Activated CD8-positive, alpha-beta T cell treated with anti-CD3 and anti-CD28 coated beads for 36 hours (primary cell): ENCODE measurements at regions of chr10 and their contacts with region 1.

Region 1: GRCh38 chr10:44974628-44975431 is 3.8 kb downstream of the DEPP1 start:
- DNase-seq: peak; percentile 68
- ATAC-seq: peak; percentile 96
- H3K4me3 Mint-ChIP-seq: peak overlapping the region; percentile 65
- H3K27ac Mint-ChIP-seq: peak overlapping the region; percentile 67
- H3K4me1 Mint-ChIP-seq: peaks cover 19% of the 10 kb centered on the region
- H3K27me3 Mint-ChIP-seq: no peaks in the 10 kb centered on the region
- CTCF ChIP-seq: peak; percentile 93

Region 2: DNA sequence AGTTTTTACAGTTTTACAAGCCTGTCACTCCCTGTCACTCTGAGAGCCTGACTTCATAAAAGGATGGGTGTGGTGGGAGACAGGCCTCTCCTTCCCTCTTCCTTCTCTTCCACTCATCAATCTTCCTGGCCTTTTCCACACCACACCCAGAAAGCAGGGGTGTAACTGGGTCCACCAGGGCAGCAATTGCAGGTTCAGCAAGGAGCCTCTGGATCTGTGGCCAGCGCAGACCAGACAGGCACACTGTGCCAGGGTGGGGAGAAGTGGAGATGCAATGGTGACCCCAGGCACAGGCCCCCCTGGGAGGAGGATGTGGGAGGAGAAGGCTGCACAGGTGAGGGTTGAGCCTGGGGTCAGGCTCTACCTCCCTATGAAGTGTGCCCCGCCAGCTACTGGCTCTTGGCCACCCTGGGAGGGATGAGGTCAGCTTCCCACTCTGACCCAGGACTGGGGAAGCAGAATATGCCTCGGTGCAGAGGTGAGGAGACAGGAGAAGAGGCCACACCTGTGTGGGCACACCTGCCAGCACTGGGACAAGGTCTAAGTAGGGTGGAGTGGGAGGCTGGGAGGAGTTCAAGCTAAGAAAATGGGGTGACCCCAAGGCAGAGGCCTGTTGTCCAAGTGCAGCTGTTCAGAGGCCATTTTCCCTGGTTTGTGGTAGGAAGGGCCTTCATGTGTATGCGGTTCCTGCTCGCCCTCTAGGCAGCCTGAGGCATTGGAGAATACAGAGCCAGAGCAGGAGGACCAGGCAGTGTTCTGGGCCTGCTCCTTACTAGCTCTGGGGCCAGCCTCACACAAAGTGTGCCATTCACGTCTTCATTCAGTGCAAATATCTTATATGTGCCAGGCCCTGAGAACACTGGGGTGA is 83.9 kb before region 1 on chr10:
- CTCF ChIA-PET with region 1: no interaction called
- POLR2A ChIA-PET with region 1: no interaction called
- intact Hi-C with region 1: no loop called
- DNase-seq: no peak
- ATAC-seq: no peak
- H3K4me3 Mint-ChIP-seq: no peak overlapping the region
- H3K27ac Mint-ChIP-seq: no peak overlapping the region
- H3K4me1 Mint-ChIP-seq: no peaks in the 10 kb centered on the region
- H3K27me3 Mint-ChIP-seq: no peaks in the 10 kb centered on the region
- CTCF ChIP-seq: no peak

Region 3: GRCh38 chr10:44962870-44963738 is 11.7 kb before region 1 on chr10:
- CTCF ChIA-PET with region 1: interaction called, 10 read pairs
- POLR2A ChIA-PET with region 1: no interaction called
- intact Hi-C with region 1: no loop called
- DNase-seq: no peak
- ATAC-seq: no peak
- H3K4me3 Mint-ChIP-seq: no peak overlapping the region
- H3K27ac Mint-ChIP-seq: no peak overlapping the region
- H3K4me1 Mint-ChIP-seq: peaks cover 34% of the 10 kb centered on the region
- H3K27me3 Mint-ChIP-seq: no peaks in the 10 kb centered on the region
- CTCF ChIP-seq: peak; percentile 24

Region 4: GRCh38 chr10:45040921-45041542 is 66.2 kb after region 1 on chr10:
- CTCF ChIA-PET with region 1: no interaction called
- POLR2A ChIA-PET with region 1: no interaction called
- intact Hi-C with region 1: no loop called
- DNase-seq: no peak
- ATAC-seq: no peak
- H3K4me3 Mint-ChIP-seq: no peak overlapping the region
- H3K27ac Mint-ChIP-seq: no peak overlapping the region
- H3K4me1 Mint-ChIP-seq: no peaks in the 10 kb centered on the region
- H3K27me3 Mint-ChIP-seq: peaks cover 8% of the 10 kb centered on the region
- CTCF ChIP-seq: no peak